Activated T-helper 1 cell treated with anti-CD3 and anti-CD28 coated beads, Interleukin-12 subunit alpha, Interleukin-12 subunit beta, Interleukin-2, Interleukin-4 antibody, amounts not matched to agents 30 ng/mL and 10 ng/mL and 1 ng/mL, durations not matched to agents 14 hours and 24 hours and 36 hours (primary cell): ENCODE measurements at regions of chr2 and their contacts with region 1.

Region 1: DNA sequence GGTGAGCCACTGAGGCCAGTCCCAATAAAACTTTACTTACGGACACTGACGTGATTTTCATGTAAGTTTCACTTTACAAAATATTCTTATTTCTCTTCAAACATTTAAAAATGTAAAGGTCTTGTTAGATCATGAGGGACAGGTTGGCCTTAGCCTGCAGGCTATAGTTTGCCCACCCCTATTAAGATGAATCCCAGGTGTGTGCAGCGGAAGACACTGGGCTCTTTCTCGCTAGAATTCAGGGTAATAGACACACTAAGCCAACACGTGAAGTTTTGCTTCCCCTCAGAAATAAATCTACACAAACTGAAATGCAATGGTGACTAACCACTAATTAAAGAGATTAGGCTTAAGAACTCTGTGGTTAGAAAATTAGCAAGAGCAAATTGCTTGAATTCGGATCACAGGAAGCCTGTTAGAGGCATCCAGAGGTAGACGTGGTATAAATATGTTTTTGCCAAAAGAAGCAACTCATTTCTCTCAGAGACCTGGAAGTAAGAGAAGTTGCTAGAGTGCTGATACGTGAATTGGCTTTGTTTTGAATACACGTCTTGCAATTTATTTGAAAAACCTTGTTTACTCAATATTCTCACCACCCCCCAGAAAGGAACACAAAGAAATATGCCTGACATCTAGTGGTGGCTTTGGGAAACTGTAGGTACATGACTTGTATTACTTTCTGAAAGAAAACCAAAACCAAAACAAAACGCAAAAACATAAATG is 151.6 kb downstream of the DTNB start:
- DNase-seq: peak; percentile 56
- H3K4me3 Mint-ChIP-seq: peak overlapping the region; percentile 5
- H3K27ac Mint-ChIP-seq: peak overlapping the region; percentile 65
- H3K4me1 Mint-ChIP-seq: peaks cover 21% of the 10 kb centered on the region
- H3K27me3 Mint-ChIP-seq: no peaks in the 10 kb centered on the region

Region 2: DNA sequence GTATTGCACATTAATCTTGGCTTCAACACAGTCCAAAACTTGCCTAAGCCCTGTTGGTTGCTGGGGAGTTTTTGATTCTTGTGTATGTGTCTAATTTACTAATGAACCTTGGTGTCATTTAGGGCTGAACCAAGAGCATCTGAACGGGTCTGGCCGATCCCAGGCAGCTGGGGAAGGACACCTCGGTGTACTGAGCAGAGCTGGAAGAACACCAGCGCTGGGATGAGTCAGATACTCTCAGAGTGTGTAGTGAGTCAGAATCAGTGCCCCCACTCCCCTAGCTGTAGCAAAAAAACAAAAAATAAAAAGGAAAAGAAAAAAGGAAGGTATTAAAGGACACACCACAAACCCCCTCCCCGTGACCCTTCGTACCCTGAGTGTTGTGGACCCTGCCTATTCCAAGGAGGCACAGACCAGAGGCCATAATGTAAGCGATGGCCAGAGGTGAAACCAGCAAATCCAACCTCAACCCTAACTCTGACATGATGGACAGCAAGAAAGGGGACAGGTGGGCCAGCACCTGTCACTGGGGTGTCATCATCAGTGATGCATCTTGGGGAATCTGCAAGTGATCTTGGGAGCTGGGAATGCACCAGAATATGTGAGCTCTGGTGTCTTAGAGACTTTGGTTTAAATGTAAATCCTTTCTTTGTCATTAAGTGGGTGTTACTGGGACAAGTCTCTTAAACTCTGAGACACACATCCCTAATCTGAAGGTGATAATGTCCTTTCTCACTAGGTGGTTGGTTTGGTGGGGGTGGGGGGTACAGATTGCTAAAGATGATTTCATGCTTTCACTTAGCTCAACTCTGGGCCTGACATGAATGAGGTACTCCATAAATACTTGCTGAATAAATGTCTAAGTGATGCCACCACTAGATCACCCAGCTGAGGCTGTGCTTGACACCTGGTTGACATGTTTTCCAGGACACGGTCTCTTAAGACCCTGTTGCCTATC is 1064.9 kb before region 1 on chr2:
- intact Hi-C with region 1: no loop called
- DNase-seq: no peak
- H3K4me3 Mint-ChIP-seq: no peak overlapping the region
- H3K27ac Mint-ChIP-seq: peak overlapping the region; percentile 32
- H3K4me1 Mint-ChIP-seq: no peaks in the 10 kb centered on the region
- H3K27me3 Mint-ChIP-seq: peaks cover 2% of the 10 kb centered on the region

Region 3: GRCh38 chr2:25276569-25277465 is 245.0 kb before region 1 on chr2:
- intact Hi-C with region 1: loop called (anchors 1 kb)
- DNase-seq: peak; percentile 73
- H3K4me3 Mint-ChIP-seq: peak overlapping the region; percentile 53
- H3K27ac Mint-ChIP-seq: peak overlapping the region; percentile 81
- H3K4me1 Mint-ChIP-seq: peaks cover 67% of the 10 kb centered on the region
- H3K27me3 Mint-ChIP-seq: no peaks in the 10 kb centered on the region

Region 4: DNA sequence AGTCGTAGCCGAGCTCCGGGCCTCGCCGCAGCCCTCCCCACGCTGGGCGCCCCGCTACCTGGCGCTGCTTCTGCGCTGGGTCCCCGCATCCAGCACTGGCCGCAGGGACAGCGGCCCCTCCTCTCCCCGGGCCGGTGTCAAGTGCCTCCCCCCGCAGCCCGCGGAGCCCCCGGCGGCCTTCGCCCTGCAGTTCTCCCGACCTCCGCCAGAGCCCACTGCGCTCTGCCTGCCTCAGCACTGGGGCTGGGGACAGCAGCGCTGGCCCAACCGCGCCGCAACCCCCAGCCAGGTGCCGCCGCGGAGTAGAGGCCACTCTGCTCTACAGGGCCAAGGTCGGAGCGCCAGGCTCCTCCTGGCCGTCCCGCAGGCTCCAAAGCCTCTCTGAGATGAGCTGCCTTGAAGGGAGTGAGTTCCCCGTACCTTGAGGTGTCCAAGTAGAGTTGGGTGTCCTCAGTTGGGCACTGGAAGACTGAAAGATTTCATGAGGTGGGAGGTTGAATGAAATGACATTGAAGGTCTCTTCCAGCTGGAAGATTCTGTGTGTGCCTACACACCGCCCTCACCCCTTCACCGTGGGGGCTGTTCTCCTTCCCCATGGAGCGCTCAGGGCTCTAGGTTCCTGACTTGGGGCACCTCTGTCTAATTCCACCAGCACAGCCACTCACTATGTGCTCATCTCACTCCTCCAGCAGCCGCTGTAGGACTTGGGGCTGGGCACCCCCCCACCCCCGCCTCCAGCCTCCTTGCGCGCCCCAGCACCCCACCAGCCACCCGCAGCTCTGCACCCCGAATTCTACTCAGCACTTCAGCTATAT is 179.2 kb before region 1 on chr2:
- intact Hi-C with region 1: loop called (anchors 1 kb)
- DNase-seq: peak; percentile 79
- H3K4me3 Mint-ChIP-seq: peak overlapping the region; percentile 88
- H3K27ac Mint-ChIP-seq: peak overlapping the region; percentile 88
- H3K4me1 Mint-ChIP-seq: peaks cover 37% of the 10 kb centered on the region
- H3K27me3 Mint-ChIP-seq: peaks cover 5% of the 10 kb centered on the region

Region 5: DNA sequence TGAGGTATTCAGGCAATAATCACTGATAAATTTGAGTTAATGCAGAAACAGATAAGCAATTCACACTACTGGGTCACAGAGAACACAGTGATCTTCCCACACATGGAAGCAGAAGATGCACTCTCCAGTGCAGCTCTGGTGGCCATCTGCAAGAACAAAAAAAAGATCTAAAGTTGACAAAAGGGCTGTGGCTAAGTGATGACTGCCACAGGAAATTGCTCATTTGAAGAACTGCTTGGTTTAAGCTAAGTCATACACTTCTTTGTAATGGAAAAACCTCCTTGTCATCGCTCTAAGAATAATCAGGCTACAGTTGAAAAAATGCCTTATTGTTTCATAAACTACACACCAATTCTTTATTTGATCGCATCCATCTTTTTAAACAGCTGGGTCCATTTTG is 36.4 kb after region 1 on chr2:
- intact Hi-C with region 1: loop called (anchors 1 kb)
- DNase-seq: peak; percentile 53
- H3K4me3 Mint-ChIP-seq: peak overlapping the region; percentile 46
- H3K27ac Mint-ChIP-seq: peak overlapping the region; percentile 98
- H3K4me1 Mint-ChIP-seq: peaks cover 63% of the 10 kb centered on the region
- H3K27me3 Mint-ChIP-seq: no peaks in the 10 kb centered on the region

Region 6: GRCh38 chr2:25592766-25593292 is 71.0 kb after region 1 on chr2:
- intact Hi-C with region 1: loop called (anchors 2 kb)
- DNase-seq: no peak
- H3K4me3 Mint-ChIP-seq: no peak overlapping the region
- H3K27ac Mint-ChIP-seq: no peak overlapping the region
- H3K4me1 Mint-ChIP-seq: peaks cover 44% of the 10 kb centered on the region
- H3K27me3 Mint-ChIP-seq: no peaks in the 10 kb centered on the region

Region 7: GRCh38 chr2:25639171-25639570 is 117.3 kb after region 1 on chr2:
- intact Hi-C with region 1: no loop called
- DNase-seq: no peak
- H3K4me3 Mint-ChIP-seq: no peak overlapping the region
- H3K27ac Mint-ChIP-seq: no peak overlapping the region
- H3K4me1 Mint-ChIP-seq: peaks cover 8% of the 10 kb centered on the region
- H3K27me3 Mint-ChIP-seq: no peaks in the 10 kb centered on the region